Colonic mucosa (tissue), 4 donors: ENCODE measurements at regions of chr9 and their contacts with region 1.

Region 1: GRCh38 chr9:107489687-107490605 is at the start of gene KLF4:
- DNase-seq: peak; percentile 95
- H3K4me3 ChIP-seq: peak within 1 kb of the TSS; percentile 60
- H3K27ac ChIP-seq: peak within 1 kb of the TSS; percentile 90
- H3K4me1 ChIP-seq: no peaks in the 10 kb centered on the region
- H3K27me3 ChIP-seq: no peaks in the 10 kb centered on the region
- CTCF ChIP-seq: no peak
- total RNA-seq, gene KLF4: 209 to 398 TPM

Region 2: GRCh38 chr9:107584186-107584585 is 94.2 kb after region 1 on chr9:
- intact Hi-C with region 1: loop called (anchors 5 kb)
- DNase-seq: no peak
- H3K4me3 ChIP-seq: no peak overlapping the region
- H3K27ac ChIP-seq: no peak overlapping the region
- H3K4me1 ChIP-seq: no peaks in the 10 kb centered on the region
- H3K27me3 ChIP-seq: no peaks in the 10 kb centered on the region
- CTCF ChIP-seq: no peak

Region 3: DNA sequence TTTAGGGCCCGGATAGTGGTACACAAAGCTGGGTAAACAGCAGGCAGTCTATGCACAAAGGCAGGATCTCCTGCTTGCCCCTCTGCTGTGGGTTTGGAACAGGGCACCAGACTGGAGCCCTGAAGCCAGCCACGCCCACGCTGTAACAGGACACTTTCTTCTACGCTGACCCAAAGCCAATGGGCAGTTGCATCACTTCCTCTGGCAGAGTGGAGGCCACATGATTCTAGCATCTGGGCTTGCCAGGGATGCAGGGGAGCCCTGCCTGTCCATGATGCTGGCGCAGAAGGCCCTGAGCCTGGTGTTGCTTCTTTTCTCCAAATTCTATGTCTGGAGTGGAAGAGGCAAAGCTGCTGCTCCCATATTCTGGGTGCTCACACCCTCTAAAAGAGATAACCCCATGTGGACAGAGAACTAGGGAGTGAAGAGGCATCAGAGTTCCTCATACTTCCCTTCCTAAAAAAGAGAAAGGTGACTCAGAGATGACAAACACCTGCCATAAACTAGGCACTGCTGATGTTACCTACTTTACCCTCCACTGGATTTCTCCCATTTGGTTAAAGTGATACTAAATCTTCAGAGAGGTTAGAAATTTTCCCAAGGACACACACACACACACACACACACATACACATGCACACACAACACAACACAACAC is 260.0 kb after region 1 on chr9:
- intact Hi-C with region 1: loop called (anchors 10 kb)
- DNase-seq: peak; percentile 80
- H3K4me3 ChIP-seq: no peak overlapping the region
- H3K27ac ChIP-seq: peak overlapping the region; percentile 69
- H3K4me1 ChIP-seq: peaks cover 6% of the 10 kb centered on the region
- H3K27me3 ChIP-seq: no peaks in the 10 kb centered on the region
- CTCF ChIP-seq: no peak

Region 4: GRCh38 chr9:107794259-107794658 is 304.3 kb after region 1 on chr9:
- intact Hi-C with region 1: loop called (anchors 10 kb)
- DNase-seq: peak; percentile 74
- H3K4me3 ChIP-seq: no peak overlapping the region
- H3K27ac ChIP-seq: peak overlapping the region; percentile 70
- H3K4me1 ChIP-seq: no peaks in the 10 kb centered on the region
- H3K27me3 ChIP-seq: no peaks in the 10 kb centered on the region
- CTCF ChIP-seq: no peak

Region 5: DNA sequence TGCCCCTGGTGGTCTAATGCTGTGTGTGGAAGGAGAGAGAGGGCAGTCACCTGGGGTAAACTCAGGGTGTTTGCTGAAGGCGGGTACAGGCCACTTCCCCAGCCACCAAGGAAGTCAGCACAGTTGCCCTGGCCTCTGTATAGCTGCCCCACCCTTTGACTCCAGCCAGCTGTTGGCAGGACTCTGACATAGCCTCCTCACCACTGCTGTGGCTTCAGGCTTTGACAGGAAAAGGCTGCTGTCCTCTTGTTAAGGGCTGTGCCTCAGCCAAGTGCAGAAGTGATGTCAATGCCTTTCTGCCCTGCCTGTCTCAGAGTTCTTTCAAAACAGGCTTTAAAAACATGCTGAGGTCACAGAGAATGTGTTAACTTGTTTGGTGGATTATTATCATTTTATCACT is 486.8 kb after region 1 on chr9:
- intact Hi-C with region 1: loop called (anchors 10 kb)
- DNase-seq: peak; percentile 88
- H3K4me3 ChIP-seq: no peak overlapping the region
- H3K27ac ChIP-seq: peak overlapping the region; percentile 65
- H3K4me1 ChIP-seq: peaks cover 5% of the 10 kb centered on the region
- H3K27me3 ChIP-seq: no peaks in the 10 kb centered on the region
- CTCF ChIP-seq: no peak

Region 6: GRCh38 chr9:109369285-109369684 is 1879.3 kb after region 1 on chr9:
- intact Hi-C with region 1: no loop called
- DNase-seq: no peak
- H3K4me3 ChIP-seq: no peak overlapping the region
- H3K27ac ChIP-seq: no peak overlapping the region
- H3K4me1 ChIP-seq: no peaks in the 10 kb centered on the region
- H3K27me3 ChIP-seq: no peaks in the 10 kb centered on the region
- CTCF ChIP-seq: no peak